B cell (primary cell): ENCODE measurements at regions of chr10 and their contacts with region 1.

Region 1: DNA sequence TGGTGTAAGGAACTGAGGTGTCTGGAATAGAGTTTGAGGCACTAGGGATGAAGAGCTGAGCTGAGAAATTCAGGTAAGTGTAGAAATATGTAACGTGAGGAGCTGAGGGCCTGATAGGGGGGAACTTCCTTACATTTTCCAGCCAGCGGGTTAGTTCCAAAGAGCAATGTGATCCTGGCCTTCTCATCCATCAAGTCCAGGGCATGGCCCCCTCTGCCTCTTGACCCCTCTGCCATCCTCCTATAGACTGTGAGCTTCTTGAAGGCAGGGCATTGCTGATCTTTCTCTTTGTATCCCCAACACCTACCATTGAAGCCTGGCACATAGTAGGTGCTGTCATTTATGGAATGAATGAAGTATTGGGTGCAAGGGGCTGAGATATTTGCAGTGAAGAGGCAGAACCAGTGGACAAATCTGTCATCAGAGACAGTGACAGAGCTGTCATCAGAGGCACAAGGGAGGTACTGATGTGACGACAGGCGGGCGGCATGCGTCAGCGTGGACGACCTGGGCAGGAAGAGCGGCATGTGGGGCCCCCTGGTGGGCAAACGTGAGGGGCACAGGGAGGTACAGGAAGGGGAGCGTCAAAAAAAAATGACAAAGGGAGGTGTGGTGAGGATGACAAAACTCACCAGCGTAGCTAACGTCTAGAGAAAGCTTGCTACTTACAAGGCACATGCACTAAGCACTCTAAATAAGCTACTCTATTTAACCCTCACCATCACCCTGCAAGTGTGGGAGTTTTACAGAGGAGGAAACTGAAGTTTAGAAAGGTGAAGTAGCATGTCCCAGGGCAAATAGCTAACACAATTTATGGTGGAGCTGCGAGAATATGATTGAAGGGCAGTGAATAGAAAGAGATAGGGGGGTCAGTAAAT is 5.2 kb upstream of the CAMK2G start:
- DNase-seq: peak; percentile 97
- ATAC-seq: peak; percentile 93
- H3K4me3 ChIP-seq: no peak overlapping the region
- H3K4me3 Mint-ChIP-seq: no peak overlapping the region
- H3K27ac ChIP-seq: peak overlapping the region; percentile 2 to 39
- H3K27ac Mint-ChIP-seq: peak overlapping the region; percentile 8
- H3K4me1 ChIP-seq: peaks cover 13 to 26% of the 10 kb centered on the region in 2 donors
- H3K4me1 Mint-ChIP-seq: peaks cover 21% of the 10 kb centered on the region
- H3K27me3 ChIP-seq: no peaks in the 10 kb centered on the region
- H3K27me3 Mint-ChIP-seq: no peaks in the 10 kb centered on the region
- CTCF ChIP-seq: peak; percentile 91

Region 2: DNA sequence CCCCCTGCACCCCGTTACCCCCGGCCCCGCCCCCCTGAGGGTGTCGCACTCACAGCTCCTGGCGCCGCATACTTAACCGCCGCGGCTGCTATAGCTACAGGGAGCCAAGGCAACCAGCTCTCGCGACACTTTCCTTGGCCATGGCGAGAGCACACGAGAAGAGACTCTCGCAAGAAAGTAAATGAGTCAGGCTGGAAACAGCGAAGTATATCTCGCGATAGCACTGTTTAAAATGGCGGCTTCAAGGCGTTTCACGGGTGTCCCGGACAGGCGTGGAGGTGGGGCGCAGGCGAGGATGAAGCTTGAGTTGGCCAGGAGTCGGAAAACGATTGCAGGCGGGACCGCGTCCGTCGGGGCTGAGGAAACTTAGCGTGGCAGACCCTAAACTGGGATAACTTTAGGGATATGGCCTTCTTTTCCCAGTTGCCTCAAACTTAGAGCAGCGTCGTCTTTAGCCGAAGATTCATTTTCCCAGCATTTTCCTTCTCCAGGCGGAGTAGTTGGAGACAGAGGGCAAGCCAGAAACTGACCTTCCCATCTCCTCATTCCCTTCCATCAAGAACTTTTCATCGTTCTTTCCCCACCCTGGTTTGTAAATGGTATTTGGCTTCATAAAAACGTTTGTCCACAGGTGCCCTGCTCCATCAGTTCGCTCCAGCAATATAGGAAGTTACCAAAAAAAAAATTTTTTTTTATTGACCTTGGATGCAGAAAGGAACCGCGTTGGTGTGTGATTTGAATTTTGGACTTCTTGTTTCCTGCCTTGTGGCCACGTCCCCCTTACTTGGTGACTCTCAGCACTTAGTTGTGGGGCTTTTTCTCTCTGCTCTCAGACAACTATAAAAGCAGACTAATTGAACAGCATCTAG is 253.4 kb before region 1 on chr10:
- CTCF ChIA-PET with region 1: no interaction called
- POLR2A ChIA-PET with region 1: no interaction called
- intact Hi-C with region 1: loop called (anchors 10 kb)
- DNase-seq: peak; percentile 96
- ATAC-seq: peak; percentile 91
- H3K4me3 ChIP-seq: peak overlapping the region; percentile 71 to 97 (median 90)
- H3K4me3 Mint-ChIP-seq: peak overlapping the region; percentile 98
- H3K27ac ChIP-seq: peak overlapping the region; percentile 70 to 92
- H3K27ac Mint-ChIP-seq: peak overlapping the region; percentile 97
- H3K4me1 ChIP-seq: peaks cover 11% of the 10 kb centered on the region in 2 donors
- H3K4me1 Mint-ChIP-seq: peaks cover 16% of the 10 kb centered on the region
- H3K27me3 ChIP-seq: no peaks in the 10 kb centered on the region
- H3K27me3 Mint-ChIP-seq: no peaks in the 10 kb centered on the region
- CTCF ChIP-seq: no peak

Region 3: GRCh38 chr10:73848821-73849489 is 30.6 kb before region 1 on chr10:
- CTCF ChIA-PET with region 1: interaction called, 498 read pairs
- POLR2A ChIA-PET with region 1: interaction called, 11 read pairs
- intact Hi-C with region 1: loop called (anchors 1 kb)
- DNase-seq: peak; percentile 96
- ATAC-seq: peak; percentile 100
- H3K4me3 ChIP-seq: no peak overlapping the region
- H3K4me3 Mint-ChIP-seq: peak overlapping the region; percentile 12
- H3K27ac ChIP-seq: peak overlapping the region; percentile 51 to 71
- H3K27ac Mint-ChIP-seq: peak overlapping the region; percentile 47
- H3K4me1 ChIP-seq: peaks cover 7 to 17% of the 10 kb centered on the region in 2 donors
- H3K4me1 Mint-ChIP-seq: peaks cover 13% of the 10 kb centered on the region
- H3K27me3 ChIP-seq: no peaks in the 10 kb centered on the region
- H3K27me3 Mint-ChIP-seq: no peaks in the 10 kb centered on the region
- CTCF ChIP-seq: peak; percentile 99

Region 4: DNA sequence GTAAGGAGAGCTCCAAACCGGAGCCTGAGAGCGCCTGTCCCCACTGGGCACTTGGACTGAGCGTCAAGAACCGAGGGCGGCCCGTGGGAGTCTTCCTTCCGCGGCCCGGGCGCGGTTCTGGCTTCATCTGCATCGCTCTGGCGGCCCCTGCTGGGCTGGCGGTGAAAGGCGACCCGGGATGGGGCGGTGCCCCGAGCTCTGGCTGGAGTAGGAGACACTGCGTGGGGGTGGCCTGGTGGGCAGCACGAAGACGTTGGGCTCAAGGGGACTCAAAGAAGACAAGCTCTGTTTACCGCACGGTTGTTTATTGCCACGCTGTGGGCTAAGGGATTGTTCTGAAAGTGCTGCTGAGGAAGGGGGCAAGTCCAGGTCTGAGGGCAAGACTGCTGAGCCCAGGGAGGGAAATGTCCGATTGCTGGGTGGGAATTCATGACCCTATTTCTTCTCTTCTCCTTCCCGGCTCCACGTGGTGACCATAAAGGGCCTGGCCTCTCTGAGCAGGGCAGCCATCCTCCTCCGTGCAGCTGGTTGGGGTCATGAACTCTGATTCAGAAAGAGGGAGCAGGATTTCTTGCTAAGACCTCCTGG is 61.2 kb after region 1 on chr10:
- CTCF ChIA-PET with region 1: interaction called, 261 read pairs
- POLR2A ChIA-PET with region 1: no interaction called
- intact Hi-C with region 1: loop called (anchors 2 kb)
- DNase-seq: peak; percentile 78
- ATAC-seq: peak; percentile 100
- H3K4me3 ChIP-seq: peak overlapping the region in 2 of 5 experiments; percentile 15 to 30
- H3K4me3 Mint-ChIP-seq: peak overlapping the region; percentile 71
- H3K27ac ChIP-seq: no peak overlapping the region
- H3K27ac Mint-ChIP-seq: peak overlapping the region; percentile 50
- H3K4me1 ChIP-seq: peaks cover 0 to 8% of the 10 kb centered on the region in 2 donors
- H3K4me1 Mint-ChIP-seq: peaks cover 7% of the 10 kb centered on the region
- H3K27me3 ChIP-seq: no peaks in the 10 kb centered on the region
- H3K27me3 Mint-ChIP-seq: peaks cover 4% of the 10 kb centered on the region
- CTCF ChIP-seq: peak; percentile 96

Region 5: DNA sequence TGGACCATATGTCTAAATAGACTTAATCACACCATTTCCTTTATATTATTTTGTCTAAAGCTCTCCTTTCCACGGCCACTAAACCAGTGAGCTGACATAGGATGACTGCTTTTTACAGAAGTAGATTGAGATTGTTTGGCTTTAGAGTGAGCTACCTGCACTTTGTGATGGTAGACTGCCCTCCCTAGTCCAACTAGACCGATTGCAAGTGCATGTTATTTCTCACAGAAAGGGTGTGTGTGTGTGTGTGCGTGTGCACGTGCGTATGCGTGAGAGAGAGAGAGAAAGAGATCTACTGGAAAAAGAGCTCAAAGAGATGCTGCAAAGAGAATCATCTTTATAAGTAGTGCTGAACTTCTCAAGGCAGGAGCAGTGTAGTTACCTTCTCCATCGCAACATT is 179.1 kb after region 1 on chr10:
- CTCF ChIA-PET with region 1: interaction called, 12 read pairs
- POLR2A ChIA-PET with region 1: no interaction called
- intact Hi-C with region 1: no loop called
- DNase-seq: peak; percentile 71
- ATAC-seq: peak; percentile 79
- H3K4me3 ChIP-seq: no peak overlapping the region
- H3K4me3 Mint-ChIP-seq: no peak overlapping the region
- H3K27ac ChIP-seq: no peak overlapping the region
- H3K27ac Mint-ChIP-seq: peak overlapping the region; percentile 8
- H3K4me1 ChIP-seq: peaks cover 12 to 13% of the 10 kb centered on the region in 2 donors
- H3K4me1 Mint-ChIP-seq: peaks cover 24% of the 10 kb centered on the region
- H3K27me3 ChIP-seq: no peaks in the 10 kb centered on the region
- H3K27me3 Mint-ChIP-seq: no peaks in the 10 kb centered on the region
- CTCF ChIP-seq: peak; percentile 34

Region 6: GRCh38 chr10:75111367-75111906 is 1231.9 kb after region 1 on chr10 and contains the start of gene SAMD8:
- CTCF ChIA-PET with region 1: no interaction called
- POLR2A ChIA-PET with region 1: no interaction called
- intact Hi-C with region 1: loop called (anchors 2 kb)
- DNase-seq: peak; percentile 98
- ATAC-seq: peak; percentile 84
- H3K4me3 ChIP-seq: peak within 1 kb of the TSS; percentile 73 to 100 (median 91)
- H3K4me3 Mint-ChIP-seq: peak within 1 kb of the TSS; percentile 89
- H3K27ac ChIP-seq: peak within 1 kb of the TSS; percentile 98
- H3K27ac Mint-ChIP-seq: peak within 1 kb of the TSS; percentile 90
- H3K4me1 ChIP-seq: peaks cover 18 to 24% of the 10 kb centered on the region in 2 donors
- H3K4me1 Mint-ChIP-seq: peaks cover 44% of the 10 kb centered on the region
- H3K27me3 ChIP-seq: no peaks in the 10 kb centered on the region
- H3K27me3 Mint-ChIP-seq: no peaks in the 10 kb centered on the region
- CTCF ChIP-seq: peak; percentile 34
- total RNA-seq, gene SAMD8: 31.7 and 35.7 TPM in 2 replicates